Dorsolateral prefrontal cortex (tissue), 120 donors: ENCODE measurements at regions of chr2 and their contacts with region 1.

Region 1: GRCh38 chr2:196076778-196077568 is 8.3 kb upstream of the DNAH7 start:
- DNase-seq: no peak
- H3K4me3 ChIP-seq: no peak overlapping the region
- H3K27ac ChIP-seq: no peak overlapping the region
- H3K27me3 ChIP-seq: no peaks in the 10 kb centered on the region
- CTCF ChIP-seq: no peak

Region 2: DNA sequence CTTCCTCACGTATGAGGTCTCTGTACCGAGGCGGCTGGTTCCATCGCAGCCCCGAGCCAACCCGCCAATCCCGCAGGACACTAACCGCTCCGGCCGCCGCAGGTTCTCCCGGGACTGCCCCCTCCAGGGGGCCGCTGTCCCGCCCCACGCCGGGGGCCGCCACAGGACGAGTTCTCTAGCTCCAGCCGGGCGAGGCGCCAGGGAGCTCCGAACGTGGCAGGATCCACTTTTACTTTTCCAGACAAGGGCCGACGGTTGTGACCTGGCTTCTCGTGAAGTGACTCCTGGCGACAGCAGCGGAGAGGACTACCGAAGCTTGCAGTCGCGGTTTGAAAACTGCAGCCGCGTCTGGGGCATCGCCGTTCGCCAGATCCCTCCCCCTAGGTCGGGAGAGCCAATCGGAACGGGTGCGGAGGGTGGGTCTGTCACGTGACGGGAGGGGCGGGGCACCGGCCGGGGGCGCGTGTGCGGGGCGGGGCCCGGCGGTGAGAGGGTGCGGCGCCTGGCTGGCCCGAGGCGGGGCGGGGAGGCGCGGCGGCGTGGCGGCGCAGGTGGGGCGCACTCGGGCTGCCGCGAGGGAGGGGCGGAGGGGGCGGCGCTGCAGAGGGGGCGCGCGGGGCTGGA is 94.4 kb after region 1 on chr2 and contains the start of gene STK17B:
- intact Hi-C with region 1: loop called in 1 of 2 experiments (anchors 10 kb)
- DNase-seq: peak; percentile 67 to 92 (median 84)
- H3K4me3 ChIP-seq: peak within 1 kb of the TSS; percentile 65 to 99 (median 91)
- H3K27ac ChIP-seq: peak within 1 kb of the TSS in 52 of 59 donors; percentile 0 to 89 (median 64)
- H3K27me3 ChIP-seq: no peaks in the 10 kb centered on the region
- CTCF ChIP-seq: peak in 5 of 56 donors; percentile 6 to 15 (median 11)
- total RNA-seq, gene STK17B: 4.1 to 30.1 (median 11.2) TPM

Region 3: DNA sequence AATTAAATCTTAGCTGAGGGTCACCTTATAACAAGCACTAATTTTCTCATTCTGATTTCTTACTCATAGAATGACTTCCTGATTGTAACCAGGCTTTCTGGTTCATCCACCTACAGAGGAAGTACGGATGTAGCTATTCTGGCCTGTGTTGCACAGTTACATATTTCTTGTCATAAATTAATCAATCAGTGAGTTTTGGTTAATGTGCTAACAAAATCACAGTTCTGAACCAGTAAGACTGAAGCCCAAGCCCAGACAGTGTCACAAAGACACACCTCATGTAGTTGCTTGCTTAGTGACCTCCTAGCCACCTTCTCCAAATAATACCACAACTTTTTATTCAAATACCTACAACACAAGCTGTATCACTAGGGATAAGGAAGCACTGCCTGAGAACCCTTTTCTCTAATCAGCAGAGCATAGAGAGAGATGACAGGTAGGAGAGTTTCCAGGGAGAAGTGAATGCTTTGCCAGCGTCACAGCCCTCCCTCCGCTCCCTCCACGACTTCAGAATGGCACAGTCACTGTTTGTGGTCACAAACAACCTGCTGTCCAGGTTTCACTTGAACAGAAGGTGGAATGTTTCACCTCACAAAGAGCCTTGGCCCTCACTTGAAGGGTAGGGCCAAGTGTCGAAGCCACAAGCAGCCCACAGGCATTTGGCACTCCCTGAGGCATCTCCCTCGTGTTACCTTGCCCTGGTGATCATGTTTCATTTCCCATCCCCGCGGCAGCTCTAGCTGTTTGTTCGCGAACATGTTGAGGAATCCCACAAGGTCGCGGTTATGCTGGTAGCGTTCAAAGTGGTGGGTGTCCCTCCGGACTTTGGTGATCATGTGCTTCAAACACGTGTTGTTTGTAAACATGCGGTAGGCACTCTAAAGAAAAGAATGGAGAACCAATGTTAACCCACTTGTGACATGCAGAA is 215.2 kb after region 1 on chr2:
- intact Hi-C with region 1: loop called in 1 of 2 experiments (anchors 10 kb)
- DNase-seq: peak in 1 of 10 donors; percentile 16
- H3K4me3 ChIP-seq: no peak overlapping the region
- H3K27ac ChIP-seq: no peak overlapping the region
- H3K27me3 ChIP-seq: no peaks in the 10 kb centered on the region
- CTCF ChIP-seq: no peak

Region 4: DNA sequence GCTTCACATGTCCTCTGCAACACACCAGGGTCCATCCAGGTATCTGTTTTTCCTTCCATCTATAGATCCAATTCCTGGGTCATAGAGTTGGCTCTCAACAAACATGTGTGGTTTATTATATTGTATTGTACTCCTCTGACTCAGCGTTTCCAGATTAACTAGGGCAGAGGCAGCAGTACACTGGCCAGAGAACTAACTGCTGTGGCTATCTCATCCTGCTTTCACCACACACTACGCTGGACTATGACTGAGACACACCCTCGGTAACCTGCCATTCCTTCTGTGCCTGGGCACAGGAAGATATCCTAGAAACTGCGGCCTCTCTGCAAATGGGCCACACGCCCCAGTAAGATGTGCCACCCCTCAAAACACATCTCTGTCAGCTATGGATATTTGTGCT is 254.2 kb after region 1 on chr2:
- intact Hi-C with region 1: loop called in 1 of 2 experiments (anchors 5 kb)
- DNase-seq: no peak
- H3K4me3 ChIP-seq: no peak overlapping the region
- H3K27ac ChIP-seq: peak overlapping the region in 4 of 59 donors; percentile 3 to 33 (median 14)
- H3K27me3 ChIP-seq: no peaks in the 10 kb centered on the region
- CTCF ChIP-seq: no peak